ENCODE measurements at regions of chr19 and their contacts with region 1.

Region 1: DNA sequence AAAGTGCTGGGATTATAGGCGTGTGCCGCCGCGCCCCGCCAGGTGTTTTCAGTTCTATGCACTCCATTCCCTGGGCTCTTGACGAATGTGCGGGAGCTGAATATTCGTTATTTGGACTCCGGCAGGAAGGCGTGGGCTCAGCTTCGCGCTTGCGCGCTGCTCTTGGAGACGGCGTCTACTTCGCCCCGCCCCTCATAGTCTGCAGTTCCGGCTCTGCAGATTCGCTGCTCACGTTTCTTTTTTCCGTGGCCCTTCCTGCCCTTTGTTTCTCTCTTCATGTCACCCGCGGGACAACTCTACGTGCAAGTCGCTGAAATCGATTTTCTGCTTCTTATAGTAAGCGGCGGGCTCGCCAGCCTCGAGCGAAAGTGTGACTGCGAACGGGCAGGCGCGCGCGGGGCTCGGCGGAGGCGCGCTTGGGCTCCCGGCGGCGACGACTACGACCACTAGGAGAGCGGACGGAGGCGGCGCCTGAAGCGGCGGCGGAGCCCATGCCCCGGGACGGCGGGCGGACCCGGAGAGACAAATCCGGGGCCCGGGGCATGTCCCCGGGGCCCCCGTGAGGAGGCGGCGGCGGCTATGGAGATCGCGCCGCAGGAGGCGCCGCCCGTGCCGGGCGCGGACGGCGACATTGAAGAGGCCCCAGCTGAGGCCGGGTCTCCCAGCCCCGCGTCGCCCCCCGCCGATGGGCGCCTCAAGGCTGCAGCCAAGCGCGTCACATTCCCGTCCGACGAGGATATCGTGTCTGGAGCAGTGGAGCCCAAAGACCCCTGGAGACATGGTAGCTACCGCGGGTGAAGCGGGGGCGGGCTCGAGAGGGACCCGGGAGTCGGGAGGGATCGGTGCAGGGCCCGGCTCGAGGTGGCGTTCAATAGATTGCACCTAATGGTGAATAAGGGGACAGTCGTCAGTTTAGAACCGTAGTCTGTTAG is at the start of gene PPP1R37:
- DNase-seq: peak; percentile 89 to 95 (median 92)
- H3K4me3 ChIP-seq: peak within 1 kb of the TSS; percentile 70 to 100 (median 98)
- H3K27ac ChIP-seq: peak within 1 kb of the TSS; percentile 75 to 99 (median 93)
- H3K27me3 ChIP-seq: no peaks in the 10 kb centered on the region
- CTCF ChIP-seq: peak in 46 of 56 donors; percentile 14 to 66 (median 38)
- total RNA-seq, gene PPP1R37: 33.6 to 77.3 (median 54.0) TPM

Region 2: GRCh38 chr19:45038931-45039893 is 53.8 kb before region 1 on chr19 and contains the start of gene CLASRP:
- intact Hi-C with region 1: loop called in 1 of 2 experiments (anchors 5 kb)
- DNase-seq: peak; percentile 80 to 94 (median 90)
- H3K4me3 ChIP-seq: peak within 1 kb of the TSS; percentile 58 to 100 (median 95)
- H3K27ac ChIP-seq: peak within 1 kb of the TSS in 58 of 59 donors; percentile 65 to 99 (median 90)
- H3K27me3 ChIP-seq: no peaks in the 10 kb centered on the region
- CTCF ChIP-seq: peak in 28 of 56 donors; percentile 2 to 50 (median 25)
- total RNA-seq, gene CLASRP: 51.6 to 162 (median 105) TPM

Region 3: GRCh38 chr19:45059278-45059965 is 33.6 kb before region 1 on chr19:
- intact Hi-C with region 1: no loop called
- DNase-seq: peak; percentile 46 to 88 (median 74)
- H3K4me3 ChIP-seq: no peak overlapping the region
- H3K27ac ChIP-seq: peak overlapping the region in 40 of 59 donors; percentile 0 to 75 (median 50)
- H3K27me3 ChIP-seq: no peaks in the 10 kb centered on the region
- CTCF ChIP-seq: peak; percentile 74 to 95 (median 90)

Region 4: DNA sequence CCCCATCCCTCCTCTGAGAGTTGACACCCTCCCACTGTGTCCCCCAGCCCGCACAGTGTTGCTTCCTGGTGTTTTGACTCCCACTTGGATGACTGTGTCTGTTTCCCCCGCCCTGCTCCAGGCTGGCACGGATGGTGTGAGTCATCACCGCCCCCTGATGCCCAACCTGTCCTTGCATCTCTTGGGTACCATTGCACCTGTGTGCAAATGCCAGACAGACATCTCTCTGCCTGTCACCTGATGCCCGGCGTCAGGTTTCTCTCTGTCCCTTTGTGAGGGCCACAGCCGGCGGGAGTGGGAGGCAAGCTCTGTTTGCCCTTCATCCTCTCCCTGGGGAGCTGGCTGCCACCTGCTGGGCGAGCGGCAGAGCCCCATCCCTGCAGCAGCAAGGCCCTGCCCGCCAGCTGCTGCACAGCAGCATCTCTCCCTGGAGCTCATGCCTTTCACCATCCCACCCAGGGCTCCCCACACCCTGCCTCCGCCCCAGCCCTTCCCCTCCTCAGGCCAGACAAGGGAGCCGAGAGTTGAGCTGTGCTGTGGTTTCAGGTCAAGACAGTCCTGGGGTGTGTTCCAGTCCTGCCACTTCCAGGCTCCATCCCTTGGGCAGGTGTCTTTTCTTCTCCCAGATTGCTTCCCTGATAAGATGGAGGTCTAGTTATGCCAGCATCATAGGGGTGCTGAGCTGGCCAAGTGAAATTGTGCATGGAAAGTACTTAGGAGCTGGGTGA is 38.0 kb after region 1 on chr19:
- intact Hi-C with region 1: loop called in 1 of 2 experiments (anchors 5 kb)
- DNase-seq: peak in 9 of 10 donors; percentile 30 to 88 (median 73)
- H3K4me3 ChIP-seq: no peak overlapping the region
- H3K27ac ChIP-seq: peak overlapping the region in 45 of 59 donors; percentile 12 to 83 (median 54)
- H3K27me3 ChIP-seq: no peaks in the 10 kb centered on the region
- CTCF ChIP-seq: peak in 46 of 56 donors; percentile 11 to 58 (median 36)

Region 5: DNA sequence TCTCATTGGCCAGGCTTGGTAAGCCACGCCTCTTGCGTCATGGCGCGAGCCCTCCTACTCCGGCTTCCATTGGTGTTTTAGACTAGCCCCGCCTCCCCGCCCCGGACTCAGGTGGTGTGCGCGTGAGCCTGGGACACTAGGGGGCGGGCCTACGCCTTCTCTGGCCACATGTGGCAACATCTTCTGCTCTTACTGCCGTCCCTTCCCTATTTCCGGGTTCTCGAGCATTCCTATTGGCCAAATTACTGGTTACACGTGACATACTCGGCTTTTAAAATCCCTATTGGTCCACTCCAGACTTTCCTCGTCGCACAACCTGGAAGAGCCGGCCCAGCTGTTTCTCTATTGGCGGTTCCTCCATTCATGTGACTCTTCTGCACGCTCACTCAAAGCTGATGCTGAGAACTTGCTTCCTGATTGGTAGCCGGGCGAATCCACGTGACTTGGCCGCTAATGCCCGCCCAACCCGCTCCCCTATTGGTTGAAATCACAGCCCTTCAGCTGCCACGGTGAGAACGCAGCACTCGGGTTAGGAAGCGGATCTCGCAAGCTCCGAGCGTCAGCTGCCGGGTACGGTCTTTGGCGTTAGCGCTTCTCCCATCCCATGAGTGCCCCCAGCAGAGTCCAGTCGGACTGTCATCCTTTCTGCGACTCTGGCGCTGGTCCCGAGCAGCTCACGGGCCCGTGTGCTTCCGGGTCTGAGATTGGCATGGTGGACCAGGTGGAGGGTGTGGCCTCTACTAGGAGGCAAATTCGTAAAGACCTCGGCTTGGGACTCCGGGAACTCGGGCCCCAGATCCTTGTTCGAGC is 85.5 kb after region 1 on chr19 and contains the start of gene BLOC1S3:
- intact Hi-C with region 1: loop called (anchors 2 to 5 kb)
- DNase-seq: peak; percentile 99 to 100 (median 100)
- H3K4me3 ChIP-seq: peak within 1 kb of the TSS; percentile 69 to 99 (median 92)
- H3K27ac ChIP-seq: peak within 1 kb of the TSS in 58 of 59 donors; percentile 20 to 93 (median 84)
- H3K27me3 ChIP-seq: no peaks in the 10 kb centered on the region
- CTCF ChIP-seq: peak in 54 of 56 donors; percentile 32 to 88 (median 59)
- total RNA-seq, gene BLOC1S3: 9.7 to 23.1 (median 13.5) TPM

Region 6: GRCh38 chr19:45200568-45200994 is 107.6 kb after region 1 on chr19:
- intact Hi-C with region 1: no loop called
- DNase-seq: peak in 4 of 10 donors; percentile 49 to 60 (median 50)
- H3K4me3 ChIP-seq: no peak overlapping the region
- H3K27ac ChIP-seq: no peak overlapping the region
- H3K27me3 ChIP-seq: no peaks in the 10 kb centered on the region
- CTCF ChIP-seq: peak in 47 of 56 donors; percentile 10 to 67 (median 41)

Measured in dorsolateral prefrontal cortex (tissue), 120 donors.